ENCODE measurements at regions of chr12 and their contacts with region 1.

Region 1: GRCh38 chr12:89051065-89051677 is 301.1 kb downstream of the DUSP6 start:
- DNase-seq: peak; percentile 22
- ATAC-seq: peak; percentile 74
- H3K4me3 Mint-ChIP-seq: no peak overlapping the region
- H3K27ac Mint-ChIP-seq: peak overlapping the region; percentile 62
- H3K4me1 Mint-ChIP-seq: peaks cover 19% of the 10 kb centered on the region
- H3K27me3 Mint-ChIP-seq: no peaks in the 10 kb centered on the region

Region 2: GRCh38 chr12:88918166-88918565 is 133.0 kb before region 1 on chr12:
- CTCF ChIA-PET with region 1: no interaction called
- POLR2A ChIA-PET with region 1: no interaction called
- intact Hi-C with region 1: no loop called
- DNase-seq: no peak
- ATAC-seq: no peak
- H3K4me3 Mint-ChIP-seq: no peak overlapping the region
- H3K27ac Mint-ChIP-seq: no peak overlapping the region
- H3K4me1 Mint-ChIP-seq: no peaks in the 10 kb centered on the region
- H3K27me3 Mint-ChIP-seq: no peaks in the 10 kb centered on the region

Region 3: GRCh38 chr12:89067421-89068187 is 16.4 kb after region 1 on chr12:
- CTCF ChIA-PET with region 1: interaction called, 11 read pairs
- POLR2A ChIA-PET with region 1: interaction called, 3 read pairs
- intact Hi-C with region 1: no loop called
- DNase-seq: no peak
- ATAC-seq: no peak
- H3K4me3 Mint-ChIP-seq: no peak overlapping the region
- H3K27ac Mint-ChIP-seq: peak overlapping the region; percentile 69
- H3K4me1 Mint-ChIP-seq: peaks cover 68% of the 10 kb centered on the region
- H3K27me3 Mint-ChIP-seq: no peaks in the 10 kb centered on the region

Region 4: DNA sequence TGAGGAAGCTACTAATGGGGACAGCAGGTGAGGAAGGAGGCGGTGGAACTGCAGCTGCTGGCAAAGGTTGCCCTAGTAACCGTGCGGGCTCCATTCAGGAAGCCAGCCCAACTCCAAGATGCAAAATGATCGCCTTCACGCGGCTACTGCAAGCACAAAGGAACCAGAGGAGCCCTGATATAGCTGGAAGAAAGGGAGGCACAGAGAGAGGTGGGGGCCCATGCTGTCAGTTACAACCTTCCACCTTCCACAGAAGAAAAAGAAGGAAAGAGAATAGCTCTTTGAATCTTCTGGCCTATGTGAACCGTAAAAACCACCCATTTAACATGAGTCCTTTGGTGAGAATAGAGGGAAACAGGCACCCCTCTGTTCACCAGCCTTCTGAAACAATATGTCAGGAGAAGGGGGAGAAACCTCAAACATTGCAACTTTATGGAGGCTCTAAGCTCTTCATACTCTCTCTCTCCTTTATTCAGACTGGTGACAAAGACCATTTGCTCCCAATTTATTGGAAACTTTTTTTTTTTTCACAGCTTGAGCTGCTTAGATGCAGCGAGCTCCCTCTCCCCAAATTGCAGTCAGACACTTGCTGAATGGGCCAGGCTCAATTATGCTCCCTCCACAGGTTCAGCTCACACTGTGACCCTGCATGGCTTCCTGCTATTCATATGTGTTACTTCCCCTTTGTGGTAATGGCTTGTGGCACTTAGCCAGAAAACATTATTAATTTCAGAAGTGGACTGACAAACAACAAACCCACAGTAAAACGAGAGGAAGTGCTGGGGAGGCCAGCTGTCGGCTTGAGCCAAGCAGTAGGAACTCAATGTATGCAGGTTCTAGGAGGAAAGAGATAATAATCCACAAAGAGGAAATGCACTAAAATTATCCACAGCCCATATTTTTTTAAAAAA is 294.9 kb after region 1 on chr12:
- CTCF ChIA-PET with region 1: interaction called, 3 read pairs
- POLR2A ChIA-PET with region 1: no interaction called
- intact Hi-C with region 1: loop called in 1 of 2 experiments (anchors 1 kb)
- DNase-seq: peak; percentile 60
- ATAC-seq: peak; percentile 80
- H3K4me3 Mint-ChIP-seq: peak overlapping the region; percentile 51
- H3K27ac Mint-ChIP-seq: peak overlapping the region; percentile 82
- H3K4me1 Mint-ChIP-seq: peaks cover 55% of the 10 kb centered on the region
- H3K27me3 Mint-ChIP-seq: peaks cover 2% of the 10 kb centered on the region

Region 5: DNA sequence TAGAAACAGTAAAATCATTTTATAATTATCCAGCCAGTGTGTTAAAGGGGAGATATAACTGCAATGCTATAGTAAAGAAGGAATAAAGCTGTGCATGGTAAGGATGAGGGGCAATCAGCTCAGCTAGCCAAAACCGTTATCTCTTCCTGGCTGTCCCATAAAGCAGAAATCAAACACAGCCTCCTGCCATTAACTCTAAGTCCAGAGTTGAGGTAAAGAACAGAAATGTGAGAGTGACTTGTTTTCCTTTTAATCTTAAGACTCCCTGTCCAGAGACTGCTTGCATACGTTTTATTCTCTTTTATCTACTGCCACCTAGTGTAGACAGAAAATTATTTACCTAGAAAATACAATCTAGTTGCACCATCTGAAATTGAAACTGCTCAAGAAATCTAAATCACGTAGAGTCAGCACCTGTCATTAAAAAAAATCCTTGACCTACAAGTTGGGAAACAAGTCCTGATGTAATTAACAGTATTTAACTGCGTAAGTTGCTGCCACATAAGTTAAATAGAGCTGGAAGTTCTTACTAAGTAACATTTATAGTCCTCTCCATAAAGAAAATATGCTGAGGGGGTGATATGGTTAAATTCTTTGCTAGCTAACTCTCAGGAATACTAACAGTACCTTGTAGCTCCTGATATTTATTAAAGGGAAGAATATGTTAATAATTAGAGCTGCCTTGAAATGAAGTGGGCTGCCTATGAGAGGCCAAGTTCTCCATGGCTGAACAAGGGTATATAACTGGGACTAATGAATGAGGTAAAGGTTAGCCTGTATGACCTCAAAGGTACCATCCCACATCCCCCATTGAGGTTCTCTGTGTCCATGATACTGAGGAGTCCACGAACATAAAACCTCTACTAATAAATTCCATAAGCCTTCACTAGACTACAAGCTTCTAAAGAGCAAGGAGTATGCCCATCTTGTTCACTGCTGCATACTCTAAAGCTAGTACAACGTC is 410.8 kb after region 1 on chr12:
- CTCF ChIA-PET with region 1: interaction called, 10 read pairs
- POLR2A ChIA-PET with region 1: no interaction called
- intact Hi-C with region 1: loop called (anchors 1 kb)
- DNase-seq: no peak
- ATAC-seq: peak; percentile 93
- H3K4me3 Mint-ChIP-seq: peak overlapping the region; percentile 13
- H3K27ac Mint-ChIP-seq: peak overlapping the region; percentile 68
- H3K4me1 Mint-ChIP-seq: peaks cover 20% of the 10 kb centered on the region
- H3K27me3 Mint-ChIP-seq: no peaks in the 10 kb centered on the region

Region 6: GRCh38 chr12:89529738-89530137 is 478.6 kb after region 1 on chr12:
- CTCF ChIA-PET with region 1: interaction called, 4 read pairs
- POLR2A ChIA-PET with region 1: no interaction called
- intact Hi-C with region 1: loop called (anchors 1 kb)
- DNase-seq: no peak
- ATAC-seq: no peak
- H3K4me3 Mint-ChIP-seq: no peak overlapping the region
- H3K27ac Mint-ChIP-seq: no peak overlapping the region
- H3K4me1 Mint-ChIP-seq: peaks cover 19% of the 10 kb centered on the region
- H3K27me3 Mint-ChIP-seq: no peaks in the 10 kb centered on the region

Measured in activated CD4-positive, alpha-beta T cell treated with anti-CD3 and anti-CD28 coated beads for 36 hours (primary cell).